ENCODE measurements at regions of chr10 and their contacts with region 1.

Region 1: GRCh38 chr10:133196221-133196915 is 33.6 kb upstream of the UTF1 start:
- DNase-seq: no peak
- H3K4me3 ChIP-seq: no peak overlapping the region
- CTCF ChIP-seq: no peak

Region 2: GRCh38 chr10:133139551-133140065 is 56.8 kb before region 1 on chr10:
- in situ Hi-C with region 1: loop called (anchors 10 kb)
- DNase-seq: no peak
- H3K4me3 ChIP-seq: no peak overlapping the region
- CTCF ChIP-seq: no peak

Region 3: GRCh38 chr10:133158756-133159610 is 37.4 kb before region 1 on chr10:
- in situ Hi-C with region 1: no loop called
- DNase-seq: no peak
- H3K4me3 ChIP-seq: no peak overlapping the region
- CTCF ChIP-seq: no peak